Activated CD4-positive, alpha-beta T cell treated with anti-CD3 and anti-CD28 coated beads, Interleukin-2, amount 10 ng/mL, durations not matched to agents 24 days and 14 days (primary cell): ENCODE measurements at regions of chr10 and their contacts with region 1.

Region 1: DNA sequence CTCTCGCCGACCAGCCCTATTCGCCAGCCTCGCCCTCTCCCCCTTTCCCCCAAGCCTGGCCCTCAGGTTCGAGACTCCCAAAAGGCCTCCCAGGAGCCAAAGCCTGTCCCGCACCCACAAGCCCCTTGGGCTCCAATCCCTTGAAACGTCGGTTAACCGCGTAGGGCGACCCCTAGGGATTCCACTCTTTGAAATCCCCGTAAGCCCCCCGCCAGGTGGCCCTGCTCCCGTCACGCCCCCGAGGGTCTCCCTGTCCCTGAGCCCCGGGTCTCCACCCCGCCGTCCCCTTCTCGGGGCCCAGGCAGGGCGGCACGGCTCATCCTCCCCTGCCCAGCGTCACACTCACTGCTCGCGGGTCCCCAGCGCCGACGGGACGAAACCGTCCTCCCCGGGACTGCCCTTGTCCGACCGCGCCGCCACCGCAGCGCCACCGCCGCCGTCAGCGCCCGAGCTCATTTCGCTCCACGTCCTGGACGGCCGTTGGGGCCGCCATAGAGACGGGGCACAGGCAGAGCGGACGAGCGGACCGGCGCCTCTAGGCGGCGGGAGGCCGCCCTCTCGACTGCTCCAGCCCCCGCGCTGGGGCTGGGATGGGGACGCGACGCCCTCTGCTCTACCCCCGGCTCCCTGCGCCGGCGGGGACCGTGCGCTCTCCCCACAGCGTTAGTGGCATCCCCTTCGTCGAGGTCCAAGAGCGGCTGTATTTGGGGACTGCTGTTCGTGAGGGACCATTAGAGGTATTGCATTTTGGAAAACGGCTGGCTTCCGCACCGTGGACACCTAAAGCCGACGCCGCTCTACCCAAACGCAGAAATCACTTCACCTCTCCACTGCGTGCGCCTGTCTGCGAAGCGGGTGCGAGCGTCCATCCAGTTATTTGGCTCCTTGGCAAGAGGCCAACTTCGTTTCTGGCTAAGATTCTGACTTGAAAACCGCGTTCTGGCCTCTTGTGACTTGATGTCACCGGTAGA is at the start of gene EEF1AKMT2:
- DNase-seq: peak; percentile 95
- H3K4me3 Mint-ChIP-seq: peak within 1 kb of the TSS; percentile 96
- H3K27ac Mint-ChIP-seq: peak within 1 kb of the TSS; percentile 97
- H3K4me1 Mint-ChIP-seq: peaks cover 17% of the 10 kb centered on the region
- H3K27me3 Mint-ChIP-seq: peaks cover 10% of the 10 kb centered on the region
- total RNA-seq, gene EEF1AKMT2: 21.5 and 22.3 TPM in 2 replicates

Region 2: GRCh38 chr10:124418726-124419501 is 372.7 kb before region 1 on chr10 and contains the start of gene OAT:
- intact Hi-C with region 1: loop called (anchors 2 kb)
- DNase-seq: peak; percentile 99
- H3K4me3 Mint-ChIP-seq: peak within 1 kb of the TSS; percentile 83
- H3K27ac Mint-ChIP-seq: peak within 1 kb of the TSS; percentile 65
- H3K4me1 Mint-ChIP-seq: peaks cover 9% of the 10 kb centered on the region
- H3K27me3 Mint-ChIP-seq: peaks cover 12% of the 10 kb centered on the region
- total RNA-seq, gene OAT: 40.2 and 41.0 TPM in 2 replicates

Region 3: DNA sequence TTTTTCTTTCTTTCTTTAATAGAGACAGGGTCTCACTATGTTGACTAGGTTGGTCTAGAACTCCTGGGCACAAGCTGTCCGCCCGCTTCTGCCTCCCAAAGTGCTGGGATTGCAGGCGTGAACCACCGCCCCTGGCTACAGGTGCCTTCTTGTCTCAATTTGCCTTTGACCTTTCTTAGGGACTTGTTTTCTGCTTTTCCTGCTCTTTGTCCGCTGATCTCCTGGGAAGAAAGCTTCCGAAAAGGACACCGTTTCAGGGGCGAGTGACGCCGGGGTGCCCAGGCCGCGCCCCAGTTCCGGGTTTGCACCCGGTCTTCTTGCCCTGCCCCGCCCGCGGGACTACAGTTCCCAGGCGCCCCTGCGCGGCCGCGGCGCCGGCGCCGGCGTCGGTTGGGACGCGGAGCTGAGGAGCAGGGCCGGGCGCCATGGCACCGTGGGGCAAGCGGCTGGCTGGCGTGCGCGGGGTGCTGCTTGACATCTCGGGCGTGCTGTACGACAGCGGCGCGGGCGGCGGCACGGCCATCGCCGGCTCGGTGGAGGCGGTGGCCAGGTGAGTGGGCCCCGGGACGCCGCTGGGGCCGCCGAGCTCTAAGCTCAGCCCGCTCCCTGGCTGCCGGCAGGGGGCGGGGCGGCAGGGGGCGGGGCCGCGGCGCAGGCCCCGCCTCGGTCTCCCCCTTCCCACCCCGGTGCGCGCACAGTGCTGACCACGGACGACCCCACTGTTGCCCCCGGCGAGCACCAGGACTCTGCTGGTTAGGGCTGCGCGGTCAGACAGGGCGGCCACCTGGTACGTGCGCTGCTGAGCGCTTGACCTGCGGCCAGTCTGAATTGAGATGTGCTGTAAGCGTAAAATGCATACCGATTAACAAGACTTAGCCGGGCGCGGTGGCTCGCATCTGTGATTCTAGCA is 330.0 kb before region 1 on chr10 and contains the start of gene LHPP:
- intact Hi-C with region 1: loop called (anchors 5 kb)
- DNase-seq: peak; percentile 97
- H3K4me3 Mint-ChIP-seq: peak within 1 kb of the TSS; percentile 77
- H3K27ac Mint-ChIP-seq: peak within 1 kb of the TSS; percentile 92
- H3K4me1 Mint-ChIP-seq: peaks cover 24% of the 10 kb centered on the region
- H3K27me3 Mint-ChIP-seq: peaks cover 11% of the 10 kb centered on the region
- total RNA-seq, gene LHPP: 8.1 and 8.6 TPM in 2 replicates

Region 4: GRCh38 chr10:124472071-124472470 is 319.6 kb before region 1 on chr10:
- intact Hi-C with region 1: no loop called
- DNase-seq: no peak
- H3K4me3 Mint-ChIP-seq: no peak overlapping the region
- H3K27ac Mint-ChIP-seq: no peak overlapping the region
- H3K4me1 Mint-ChIP-seq: peaks cover 3% of the 10 kb centered on the region
- H3K27me3 Mint-ChIP-seq: no peaks in the 10 kb centered on the region

Region 5: GRCh38 chr10:124802313-124802675 is 10.6 kb after region 1 on chr10:
- intact Hi-C with region 1: loop called (anchors 1 kb)
- DNase-seq: peak; percentile 74
- H3K4me3 Mint-ChIP-seq: peak overlapping the region; percentile 95
- H3K27ac Mint-ChIP-seq: peak overlapping the region; percentile 89
- H3K4me1 Mint-ChIP-seq: peaks cover 14% of the 10 kb centered on the region
- H3K27me3 Mint-ChIP-seq: peaks cover 8% of the 10 kb centered on the region

Region 6: DNA sequence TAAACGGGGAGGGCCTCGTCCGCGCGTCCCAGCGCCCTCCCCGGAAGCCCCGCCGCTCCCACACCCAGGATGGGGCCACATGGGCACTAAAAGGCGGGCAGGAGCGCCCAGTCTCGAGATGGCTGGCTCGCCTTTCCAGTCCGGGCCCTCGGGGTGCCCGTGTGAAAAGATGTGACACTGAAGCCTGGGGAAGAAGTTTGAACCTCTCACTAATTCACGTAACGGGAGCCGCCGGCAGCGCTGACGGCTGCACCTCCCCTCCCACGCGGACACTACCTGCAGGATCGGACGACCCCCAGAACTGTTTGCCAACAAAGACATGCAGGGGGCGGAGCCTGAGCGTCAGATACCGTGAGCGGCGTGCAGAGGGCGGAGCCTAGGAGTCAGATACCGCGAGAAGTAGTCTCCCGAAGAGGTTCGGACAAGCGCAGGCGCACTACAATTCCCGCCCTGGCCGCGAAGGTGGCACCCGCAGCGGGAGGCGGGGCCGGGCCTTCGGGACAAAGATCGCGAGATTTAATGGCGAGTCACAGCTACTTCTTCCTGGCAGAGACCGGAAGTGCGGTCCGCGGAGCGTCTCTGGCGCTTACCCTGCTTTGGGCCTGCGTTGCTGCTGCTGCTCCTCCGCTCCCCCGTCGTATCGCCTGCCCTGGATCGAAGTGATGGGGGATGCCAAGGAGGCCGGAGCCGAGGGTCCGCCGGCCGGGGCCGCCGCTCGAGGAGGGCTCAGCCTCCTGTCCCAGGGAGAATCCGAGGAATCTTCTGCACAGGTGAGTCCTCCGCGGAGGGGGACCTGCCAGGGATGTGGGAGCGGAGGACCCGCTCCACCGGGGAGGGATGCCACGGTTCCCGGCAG is 927.7 kb after region 1 on chr10 and contains the start of gene EDRF1:
- intact Hi-C with region 1: loop called (anchors 5 kb)
- DNase-seq: peak; percentile 100
- H3K4me3 Mint-ChIP-seq: peak within 1 kb of the TSS; percentile 98
- H3K27ac Mint-ChIP-seq: peak within 1 kb of the TSS; percentile 96
- H3K4me1 Mint-ChIP-seq: peaks cover 18% of the 10 kb centered on the region
- H3K27me3 Mint-ChIP-seq: no peaks in the 10 kb centered on the region
- total RNA-seq, gene EDRF1: 40.8 and 43.2 TPM in 2 replicates